ENCODE measurements at regions of chr6 and their contacts with region 1.

Region 1: DNA sequence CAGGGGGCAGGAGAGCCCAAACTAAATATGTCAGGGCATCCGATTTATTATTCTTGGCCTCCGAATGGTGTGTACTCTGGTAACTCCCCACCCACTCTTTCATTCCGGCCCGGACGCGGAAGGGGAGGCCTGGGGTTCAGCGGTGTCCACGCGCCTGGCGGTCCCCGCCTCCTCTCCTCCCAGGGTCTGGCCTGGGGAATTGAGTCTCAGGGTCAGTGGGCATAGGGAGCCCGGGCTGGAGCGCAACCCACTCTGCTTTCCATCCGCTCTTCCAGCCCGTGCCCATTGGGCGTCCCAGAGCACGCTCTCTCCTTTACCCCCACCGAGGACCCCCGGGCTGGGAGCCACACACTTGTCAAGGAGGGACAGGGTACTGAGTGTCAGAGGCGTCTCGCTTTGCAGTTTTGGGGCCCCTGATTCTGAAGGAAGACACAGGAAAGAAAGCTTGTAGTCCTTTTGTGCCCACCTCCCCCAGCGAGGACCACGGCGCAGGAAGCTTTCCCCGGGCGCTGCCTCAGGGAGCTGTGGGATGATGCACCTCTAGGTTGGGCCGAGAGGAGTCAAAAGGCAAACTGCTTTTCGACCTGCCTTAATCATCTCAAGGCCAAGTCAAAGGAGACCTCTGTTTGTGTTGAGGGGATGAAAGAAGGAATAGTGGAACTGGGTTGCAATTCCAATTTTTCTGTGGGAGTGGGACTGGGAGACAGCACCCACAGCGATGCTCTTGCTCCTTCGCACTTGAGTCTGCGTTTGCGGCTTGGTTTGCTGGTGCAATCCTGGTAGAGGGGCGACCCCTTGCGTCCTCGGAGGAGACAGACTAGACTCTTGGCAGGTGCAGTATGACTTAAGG is 2.5 kb downstream of the RSPO3 start:
- DNase-seq: peak; percentile 60 to 73
- H3K4me3 ChIP-seq: no peak overlapping the region
- H3K27ac ChIP-seq: no peak overlapping the region
- H3K4me1 ChIP-seq: no peaks in the 10 kb centered on the region
- H3K27me3 ChIP-seq: peaks cover 34% of the 10 kb centered on the region
- CTCF ChIP-seq: peak; percentile 98

Region 2: DNA sequence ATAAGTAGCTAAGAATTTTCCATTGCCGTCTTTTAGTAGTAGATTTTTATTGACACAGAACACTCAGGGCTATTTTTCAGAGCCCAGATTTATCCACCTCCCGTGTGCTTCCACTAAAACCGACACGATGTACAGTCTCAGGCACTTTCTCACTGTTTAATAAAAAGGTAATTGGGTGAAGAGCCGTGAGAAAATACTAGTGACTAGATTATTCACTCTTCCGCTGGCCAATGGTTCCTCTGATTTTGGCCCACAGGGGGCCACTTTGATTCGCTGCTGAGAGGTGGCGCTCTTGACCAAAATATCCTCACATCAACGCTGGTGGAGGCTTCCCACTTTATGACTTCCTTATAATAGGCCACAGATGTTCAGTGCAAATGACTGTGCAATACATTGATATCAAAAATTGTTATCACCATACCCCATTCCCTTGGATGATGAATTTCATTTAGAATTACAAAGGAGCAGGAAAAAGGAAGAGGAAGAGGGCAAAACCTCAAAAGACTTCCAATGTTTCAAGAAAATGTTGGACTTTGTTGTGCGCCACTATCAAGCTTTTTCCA is 1806.9 kb before region 1 on chr6:
- CTCF ChIA-PET with region 1: no interaction called
- POLR2A ChIA-PET with region 1: no interaction called
- intact Hi-C with region 1: loop called (anchors 2 kb)
- DNase-seq: peak; percentile 59 to 62
- H3K4me3 ChIP-seq: no peak overlapping the region
- H3K27ac ChIP-seq: no peak overlapping the region
- H3K4me1 ChIP-seq: 0 out of 2 replicates have a peak, but pooled peaks cover 5% of the 10 kb centered on the region
- H3K27me3 ChIP-seq: no peaks in the 10 kb centered on the region
- CTCF ChIP-seq: peak; percentile 96

Region 3: DNA sequence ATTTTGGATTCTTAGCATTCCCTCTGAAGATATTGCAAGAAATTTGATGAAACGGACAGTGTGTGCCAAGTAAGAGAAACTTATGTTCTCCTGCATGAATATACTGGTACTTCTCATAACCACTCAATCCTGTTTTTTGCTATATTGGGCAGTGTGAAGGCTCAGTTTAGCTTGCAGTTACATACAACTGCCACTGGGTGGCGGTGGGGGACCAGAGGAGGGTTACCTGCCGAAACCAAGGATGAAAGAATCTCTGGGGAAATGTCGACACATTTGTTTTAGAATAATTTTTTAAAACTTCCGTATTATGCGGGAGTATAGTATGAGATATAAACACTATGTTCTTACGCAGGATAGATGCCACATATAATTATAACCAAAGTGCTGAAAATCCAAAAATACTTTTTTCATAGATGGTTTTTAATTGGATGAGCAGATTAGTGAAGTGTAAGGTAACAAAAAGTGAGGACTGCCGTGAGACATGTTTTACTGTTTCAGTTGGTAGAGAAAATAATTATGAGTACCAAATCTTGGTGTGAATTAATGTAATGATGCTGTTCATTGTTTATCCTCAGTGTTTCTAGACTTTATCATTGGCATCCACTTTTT is 1124.9 kb before region 1 on chr6:
- CTCF ChIA-PET with region 1: no interaction called
- POLR2A ChIA-PET with region 1: no interaction called
- intact Hi-C with region 1: loop called (anchors 1 kb)
- DNase-seq: peak; percentile 61 to 64
- H3K4me3 ChIP-seq: no peak overlapping the region
- H3K27ac ChIP-seq: no peak overlapping the region
- H3K4me1 ChIP-seq: no peaks in the 10 kb centered on the region
- H3K27me3 ChIP-seq: no peaks in the 10 kb centered on the region
- CTCF ChIP-seq: peak; percentile 100

Region 4: DNA sequence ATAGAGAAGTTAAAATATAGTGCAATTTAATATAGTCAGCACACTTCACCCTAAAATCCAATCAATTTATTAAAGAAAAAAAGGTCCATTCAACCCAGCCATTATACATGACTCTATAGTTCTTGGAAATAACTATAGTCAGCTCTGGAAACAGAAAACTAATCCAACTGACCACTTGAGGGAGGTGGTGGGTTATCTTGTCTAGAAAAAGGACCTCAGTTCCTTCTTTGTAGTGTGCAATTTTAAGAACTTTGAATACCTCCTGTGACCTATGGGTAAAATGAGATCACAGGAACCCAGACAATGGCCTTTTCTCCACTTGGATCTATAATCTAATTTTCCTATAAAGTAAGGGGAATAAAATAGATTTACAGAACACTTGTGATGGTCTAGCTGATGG is 944.7 kb before region 1 on chr6:
- CTCF ChIA-PET with region 1: no interaction called
- POLR2A ChIA-PET with region 1: no interaction called
- intact Hi-C with region 1: loop called (anchors 1 kb)
- DNase-seq: peak in 1 of 2 experiments; percentile 44
- H3K4me3 ChIP-seq: no peak overlapping the region
- H3K27ac ChIP-seq: peak overlapping the region; percentile 4; the same call in 1 of the 2 replicates
- H3K4me1 ChIP-seq: peaks cover 38% of the 10 kb centered on the region
- H3K27me3 ChIP-seq: no peaks in the 10 kb centered on the region
- CTCF ChIP-seq: peak; percentile 66

Region 5: DNA sequence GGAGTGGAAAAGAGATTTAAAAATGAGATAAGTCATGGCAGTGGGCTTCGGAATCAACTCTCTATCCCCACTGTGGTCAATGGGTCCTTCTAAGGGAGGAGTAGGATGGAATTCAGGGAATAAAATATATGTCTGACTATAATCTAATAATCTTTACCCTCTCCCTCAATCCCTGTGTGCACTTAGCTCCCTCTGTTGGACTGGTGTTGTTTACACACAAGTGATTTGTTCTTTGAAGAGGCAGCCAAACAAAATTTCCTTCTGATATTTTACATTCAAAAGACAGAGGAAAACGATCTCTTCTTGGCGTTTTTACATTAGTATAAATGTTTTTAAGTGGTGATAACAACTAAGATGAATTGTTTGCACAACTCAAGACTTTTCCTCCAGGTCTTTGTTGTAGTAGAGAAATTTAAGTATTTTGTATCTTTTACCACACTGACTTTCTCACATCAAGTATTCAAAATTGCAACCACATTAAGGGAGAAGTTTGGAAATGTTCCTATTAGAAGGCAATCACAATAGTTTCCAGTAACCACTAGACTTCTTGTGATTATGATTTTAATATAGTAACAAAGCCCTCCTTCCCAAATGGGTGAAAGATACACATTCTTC is 463.3 kb before region 1 on chr6:
- CTCF ChIA-PET with region 1: no interaction called
- POLR2A ChIA-PET with region 1: no interaction called
- intact Hi-C with region 1: loop called (anchors 2 kb)
- DNase-seq: peak; percentile 3 to 48
- H3K4me3 ChIP-seq: no peak overlapping the region
- H3K27ac ChIP-seq: no peak overlapping the region
- H3K4me1 ChIP-seq: no peaks in the 10 kb centered on the region
- H3K27me3 ChIP-seq: no peaks in the 10 kb centered on the region
- CTCF ChIP-seq: peak; percentile 86

Region 6: GRCh38 chr6:127100510-127101140 is 20.4 kb before region 1 on chr6:
- CTCF ChIA-PET with region 1: no interaction called
- POLR2A ChIA-PET with region 1: no interaction called
- intact Hi-C with region 1: loop called (anchors 2 kb)
- DNase-seq: no peak
- H3K4me3 ChIP-seq: no peak overlapping the region
- H3K27ac ChIP-seq: peak overlapping the region; percentile 85; the same call in 1 of the 2 replicates
- H3K4me1 ChIP-seq: peaks cover 17% of the 10 kb centered on the region
- H3K27me3 ChIP-seq: no peaks in the 10 kb centered on the region
- CTCF ChIP-seq: peak; percentile 55

Region 7: DNA sequence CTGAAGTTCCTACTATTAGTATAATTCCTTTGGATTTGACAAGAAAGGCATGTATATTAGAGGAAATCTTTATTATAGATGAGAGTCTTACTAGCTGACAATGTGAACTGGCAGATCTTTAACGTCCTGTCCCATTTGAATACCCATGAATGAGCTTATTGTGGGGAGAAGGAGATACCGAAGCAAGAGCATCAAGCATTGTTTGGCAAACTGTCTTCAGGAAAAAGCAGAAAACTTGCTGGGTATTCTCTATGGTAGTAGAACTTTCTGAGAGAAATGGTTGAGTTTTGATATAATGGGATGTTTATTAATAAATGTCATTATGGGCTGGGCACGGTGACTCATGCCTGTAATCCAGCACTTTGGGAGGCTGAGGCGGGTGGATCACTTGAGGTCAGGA is 15.8 kb after region 1 on chr6:
- CTCF ChIA-PET with region 1: no interaction called
- POLR2A ChIA-PET with region 1: no interaction called
- intact Hi-C with region 1: no loop called
- DNase-seq: no peak
- H3K4me3 ChIP-seq: no peak overlapping the region
- H3K27ac ChIP-seq: no peak overlapping the region
- H3K4me1 ChIP-seq: no peaks in the 10 kb centered on the region
- H3K27me3 ChIP-seq: no peaks in the 10 kb centered on the region
- CTCF ChIP-seq: no peak

Measured in PC-9 (cell line).